ENCODE measurements at regions of chr10 and their contacts with region 1.

Region 1: DNA sequence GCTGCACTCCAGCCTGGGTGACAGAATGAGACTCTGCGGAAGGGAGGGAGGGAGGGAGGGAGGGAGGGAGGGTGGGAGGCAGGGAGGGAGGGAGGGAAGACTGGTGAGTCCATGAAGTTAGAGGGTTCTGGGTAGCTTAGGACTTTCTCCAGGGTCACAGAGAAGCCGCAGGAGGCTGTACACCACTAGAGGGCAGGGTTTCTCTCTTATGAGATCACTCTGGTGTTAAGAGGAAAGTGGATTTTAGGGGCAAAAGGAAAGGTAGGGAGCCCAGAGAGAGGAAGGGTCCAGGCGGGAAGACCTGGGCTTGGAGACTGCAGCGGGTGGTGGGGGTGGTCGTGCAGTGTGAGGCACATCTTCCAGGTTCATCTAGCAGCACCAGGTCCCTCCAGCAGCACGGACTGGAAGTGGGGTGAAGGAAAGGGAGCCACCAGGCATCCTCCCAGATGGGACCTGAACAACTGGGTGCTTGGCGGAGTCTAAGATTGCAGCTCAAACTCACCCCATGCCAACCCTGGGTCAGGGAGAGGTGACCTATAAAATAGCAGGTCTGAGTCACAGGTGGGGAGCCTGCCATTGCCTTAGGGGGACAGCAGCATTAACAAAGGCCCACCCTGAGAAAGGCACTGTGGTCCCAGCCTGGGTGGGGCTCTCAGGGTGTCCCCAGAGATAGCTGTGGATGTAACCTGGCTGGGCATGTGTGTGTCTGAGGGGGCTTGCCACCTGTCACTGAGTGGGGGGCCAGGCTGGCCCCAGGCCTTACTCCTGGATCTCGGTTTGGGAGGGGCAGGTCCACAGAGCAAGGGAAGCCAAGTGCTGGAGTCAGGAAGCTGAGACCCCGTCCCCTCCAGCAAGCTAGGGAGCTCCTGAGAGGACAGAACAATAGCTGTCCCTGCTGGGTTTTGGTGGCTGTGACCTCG is 48.5 kb upstream of the SLC29A3 start:
- DNase-seq: no peak
- H3K4me3 ChIP-seq: no peak overlapping the region
- H3K27ac ChIP-seq: peak overlapping the region; percentile 21
- H3K27me3 ChIP-seq: no peaks in the 10 kb centered on the region
- CTCF ChIP-seq: peak; percentile 80

Region 2: DNA sequence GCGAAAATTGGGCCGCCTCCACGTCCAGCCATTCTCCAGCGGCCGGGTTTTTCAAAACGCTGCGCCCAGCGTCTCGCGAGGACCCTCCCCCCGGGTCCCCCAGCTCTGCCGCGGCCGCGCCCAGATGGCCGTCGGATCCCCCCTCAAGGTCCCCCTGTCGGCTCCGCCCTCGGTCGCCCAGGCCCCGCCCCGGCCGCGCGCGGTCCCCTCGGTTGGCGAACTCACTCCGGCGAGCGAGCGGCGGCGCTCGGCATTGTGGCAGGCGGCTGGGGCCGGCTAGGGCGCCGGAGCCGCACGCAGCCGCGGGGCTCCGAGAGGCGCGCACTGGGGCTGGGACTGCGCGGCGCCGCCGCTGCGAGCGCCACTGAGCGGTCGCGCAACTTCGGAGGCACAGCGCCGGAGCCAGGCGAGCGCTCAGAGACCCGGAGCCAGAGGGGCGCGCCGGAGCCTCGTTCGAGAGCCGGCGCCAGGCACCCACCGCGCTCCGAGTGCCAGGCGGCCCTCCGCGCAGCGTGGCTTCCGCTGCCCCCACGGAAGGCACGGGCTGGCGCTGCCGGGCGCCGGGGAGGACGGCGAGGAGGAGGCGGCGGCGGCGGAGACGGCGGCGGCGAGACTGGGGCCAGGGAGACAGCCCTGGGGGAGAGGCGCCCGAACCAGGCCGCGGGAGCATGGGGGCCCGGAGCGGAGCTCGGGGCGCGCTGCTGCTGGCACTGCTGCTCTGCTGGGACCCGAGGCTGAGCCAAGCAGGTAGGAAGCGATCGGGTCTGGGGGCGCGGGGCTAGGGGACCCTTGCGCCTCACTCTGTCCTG is 58.0 kb before region 1 on chr10 and contains the start of gene UNC5B:
- CTCF ChIA-PET with region 1: interaction called, 48 read pairs
- POLR2A ChIA-PET with region 1: interaction called, 6 read pairs
- DNase-seq: peak; percentile 48
- H3K4me3 ChIP-seq: peak within 1 kb of the TSS; percentile 88
- H3K27ac ChIP-seq: peak within 1 kb of the TSS; percentile 11
- H3K27me3 ChIP-seq: peaks cover 24% of the 10 kb centered on the region
- CTCF ChIP-seq: peak; percentile 23
- polyA plus RNA-seq, gene UNC5B: 8.1 and 10.2 TPM in 2 replicates

Region 3: DNA sequence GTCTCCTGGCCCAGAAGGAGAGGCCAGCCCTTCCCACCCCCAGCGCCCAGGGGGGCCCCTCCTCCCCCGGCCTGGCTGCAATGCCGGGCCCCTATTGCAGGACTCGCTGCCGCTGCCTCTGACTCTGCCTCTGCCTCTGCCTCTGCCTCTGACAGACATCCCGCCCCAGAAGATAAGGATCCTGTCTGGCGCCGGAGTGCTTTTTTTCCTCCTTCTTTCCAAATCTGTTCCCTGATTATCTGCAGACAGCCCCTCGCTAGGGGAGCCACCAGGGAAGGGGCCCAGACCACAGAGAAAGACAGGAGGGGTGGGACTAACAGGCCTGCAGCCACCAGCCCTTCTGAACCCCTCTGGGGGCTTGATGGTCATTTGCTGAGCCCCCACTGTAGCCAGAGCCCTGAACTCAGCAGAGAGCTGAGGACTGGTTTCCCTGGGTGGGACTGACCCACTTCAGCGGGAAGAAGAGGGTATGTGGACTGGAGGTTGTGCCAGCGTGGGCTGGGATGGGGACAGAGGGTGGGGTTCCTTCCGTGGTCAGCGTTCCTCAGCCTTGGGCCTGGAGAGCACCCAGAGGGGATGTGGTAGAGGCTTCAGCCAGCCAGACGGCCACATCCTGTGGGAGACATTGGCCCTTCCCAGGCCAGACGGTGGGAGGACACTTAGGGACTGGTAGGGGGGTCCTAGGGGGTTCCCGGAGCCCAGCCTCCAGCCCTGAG is 35.4 kb before region 1 on chr10:
- CTCF ChIA-PET with region 1: interaction called, 12 read pairs
- POLR2A ChIA-PET with region 1: no interaction called
- DNase-seq: no peak
- H3K4me3 ChIP-seq: no peak overlapping the region
- H3K27ac ChIP-seq: peak overlapping the region; percentile 47
- H3K27me3 ChIP-seq: no peaks in the 10 kb centered on the region
- CTCF ChIP-seq: no peak

Region 4: DNA sequence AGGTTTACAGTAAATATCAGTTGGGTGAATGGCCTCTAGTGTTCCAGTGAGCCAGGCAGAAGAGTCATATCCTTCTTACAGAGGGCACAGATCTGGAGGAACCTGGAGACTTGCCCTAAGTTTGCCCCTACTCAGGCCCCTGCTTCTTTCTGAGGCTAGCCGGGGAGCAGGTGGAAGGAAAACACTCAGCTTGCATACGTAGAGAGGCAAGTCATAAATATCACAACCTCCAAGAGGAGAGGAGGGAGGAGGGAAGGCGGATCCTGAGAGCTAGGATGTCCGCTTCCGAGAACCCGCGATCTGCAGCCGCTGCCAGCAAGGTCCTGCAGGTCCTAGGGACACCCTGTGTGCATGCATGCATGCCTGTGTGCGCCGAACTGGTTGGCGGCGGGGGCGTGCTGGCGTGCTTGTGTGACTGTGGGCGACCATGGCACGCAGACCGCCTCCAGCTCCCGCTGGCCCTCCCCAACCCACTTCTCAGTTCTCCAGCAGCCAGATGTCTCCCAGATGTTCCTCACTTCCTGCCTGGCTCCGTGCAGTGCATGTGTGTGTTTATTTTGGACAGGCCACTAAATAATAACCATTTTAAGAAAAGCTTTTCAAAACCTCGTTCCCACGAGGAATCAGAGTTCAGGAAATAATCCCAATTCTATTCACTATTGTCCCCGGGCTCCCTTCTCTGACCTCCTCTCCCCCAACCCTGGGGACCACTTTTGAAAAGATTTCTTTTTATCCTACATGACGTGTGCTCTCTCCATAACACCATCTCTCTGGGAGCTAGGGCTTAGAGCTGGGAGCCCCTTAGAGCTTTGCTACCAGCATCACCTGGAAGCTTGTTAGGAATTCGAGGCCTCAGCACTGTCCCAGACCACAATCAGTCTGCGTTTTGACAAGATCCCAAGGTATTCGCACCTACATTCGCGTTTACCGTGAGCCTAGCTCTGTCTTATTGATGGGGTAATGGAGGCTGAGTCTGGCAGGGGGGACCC is 25.8 kb before region 1 on chr10:
- CTCF ChIA-PET with region 1: interaction called, 20 read pairs
- POLR2A ChIA-PET with region 1: interaction called, 15 read pairs
- DNase-seq: peak; percentile 84
- H3K4me3 ChIP-seq: peak overlapping the region; percentile 55
- H3K27ac ChIP-seq: peak overlapping the region; percentile 96
- H3K27me3 ChIP-seq: no peaks in the 10 kb centered on the region
- CTCF ChIP-seq: no peak

Region 5: GRCh38 chr10:71255808-71256660 is 14.5 kb before region 1 on chr10:
- CTCF ChIA-PET with region 1: interaction called, 24 read pairs
- POLR2A ChIA-PET with region 1: no interaction called
- DNase-seq: peak; percentile 74
- H3K4me3 ChIP-seq: no peak overlapping the region
- H3K27ac ChIP-seq: peak overlapping the region; percentile 77
- H3K27me3 ChIP-seq: no peaks in the 10 kb centered on the region
- CTCF ChIP-seq: no peak

Region 6: GRCh38 chr10:71285180-71285545 is 14.6 kb after region 1 on chr10:
- CTCF ChIA-PET with region 1: interaction called, 38 read pairs
- POLR2A ChIA-PET with region 1: no interaction called
- DNase-seq: no peak
- H3K4me3 ChIP-seq: no peak overlapping the region
- H3K27ac ChIP-seq: no peak overlapping the region
- H3K27me3 ChIP-seq: no peaks in the 10 kb centered on the region
- CTCF ChIP-seq: peak; percentile 79

Region 7: DNA sequence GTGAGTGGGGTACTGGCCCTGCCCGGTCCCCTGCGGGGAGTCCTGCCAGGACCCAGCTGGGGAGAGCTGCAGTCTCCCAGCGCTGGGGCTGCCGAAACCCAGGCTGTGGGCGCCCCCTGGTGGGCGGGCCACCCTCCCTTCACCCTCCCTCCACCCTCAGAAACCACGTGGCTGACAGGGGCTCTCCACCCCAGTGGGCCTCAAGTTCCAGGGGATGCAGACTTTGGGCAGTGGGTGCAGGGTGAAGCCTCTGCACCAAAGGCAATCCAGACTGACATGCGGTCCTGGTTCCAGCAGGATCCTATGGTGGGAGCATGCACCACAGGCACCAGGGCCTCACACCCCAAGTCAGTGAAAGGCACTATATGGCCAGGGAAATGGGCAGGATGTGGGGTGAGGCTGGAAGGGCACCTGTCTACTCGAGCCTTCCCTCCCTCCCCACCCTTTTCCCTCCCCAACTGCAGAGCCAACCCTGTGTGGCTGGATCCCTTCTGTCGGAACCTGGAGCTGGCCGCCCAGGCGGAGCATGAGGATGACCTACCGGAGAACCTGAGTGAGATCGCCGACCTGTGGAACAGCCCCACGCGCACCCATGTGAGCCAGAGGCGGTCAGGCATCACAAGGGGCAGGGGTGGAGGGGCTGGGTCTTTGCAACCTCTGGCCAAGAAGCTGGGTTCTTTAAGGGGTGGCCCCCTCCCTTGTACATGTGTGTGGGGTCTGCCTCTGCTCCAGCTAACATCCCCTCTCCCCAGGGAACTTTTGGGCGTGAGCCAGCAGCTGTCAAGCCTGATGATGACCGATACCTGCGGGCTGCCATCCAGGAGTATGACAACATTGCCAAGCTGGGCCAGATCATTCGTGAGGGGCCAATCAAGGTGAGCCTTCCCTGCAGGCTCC is 541.7 kb after region 1 on chr10:
- CTCF ChIA-PET with region 1: interaction called, 10 read pairs
- POLR2A ChIA-PET with region 1: no interaction called
- DNase-seq: no peak
- H3K4me3 ChIP-seq: no peak overlapping the region
- H3K27ac ChIP-seq: no peak overlapping the region
- H3K27me3 ChIP-seq: peaks cover 5% of the 10 kb centered on the region
- CTCF ChIP-seq: peak; percentile 86

Measured in AG04450 (cell line).